Gastrocnemius medialis (tissue), 4 donors: ENCODE measurements at regions of chr4 and their contacts with region 1.

Region 1: GRCh38 chr4:109406338-109406931 is 27.2 kb upstream of the SEC24B start:
- DNase-seq: no peak
- ATAC-seq: peak; percentile 73 to 80
- H3K4me3 ChIP-seq: no peak overlapping the region
- H3K27ac ChIP-seq: no peak overlapping the region
- H3K4me1 ChIP-seq: no peaks in the 10 kb centered on the region
- H3K27me3 ChIP-seq: no peaks in the 10 kb centered on the region
- CTCF ChIP-seq: peak; percentile 47 to 70 (median 63)
- POLR2A ChIP-seq: no peak

Region 2: DNA sequence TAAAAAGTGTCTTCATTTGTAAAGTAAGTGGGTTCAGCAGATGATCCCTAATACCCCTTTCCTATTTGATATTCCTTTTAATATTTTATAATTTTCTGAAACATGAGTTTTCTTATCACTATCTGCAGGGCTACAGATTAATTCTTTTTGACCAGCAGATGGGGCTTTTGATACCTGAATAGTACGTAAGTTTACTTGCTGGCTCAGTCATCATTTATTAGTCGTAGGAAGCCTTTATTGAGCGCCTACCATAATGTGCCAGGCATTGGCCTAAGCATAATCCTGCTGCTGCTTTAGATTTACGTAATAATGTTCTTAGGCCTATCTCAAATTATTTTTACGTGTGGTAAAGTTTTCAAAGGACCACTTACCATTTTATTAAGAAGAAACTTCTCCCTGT is 723.0 kb before region 1 on chr4:
- in situ Hi-C with region 1: loop called in 1 of 4 experiments (anchors 25 kb)
- intact Hi-C with region 1: loop called (anchors 5 kb)
- DNase-seq: no peak
- ATAC-seq: no peak
- H3K4me3 ChIP-seq: no peak overlapping the region
- H3K27ac ChIP-seq: no peak overlapping the region
- H3K4me1 ChIP-seq: no peaks in the 10 kb centered on the region
- H3K27me3 ChIP-seq: no peaks in the 10 kb centered on the region
- CTCF ChIP-seq: peak in 2 of 5 experiments; percentile 29 to 31
- POLR2A ChIP-seq: no peak

Region 3: DNA sequence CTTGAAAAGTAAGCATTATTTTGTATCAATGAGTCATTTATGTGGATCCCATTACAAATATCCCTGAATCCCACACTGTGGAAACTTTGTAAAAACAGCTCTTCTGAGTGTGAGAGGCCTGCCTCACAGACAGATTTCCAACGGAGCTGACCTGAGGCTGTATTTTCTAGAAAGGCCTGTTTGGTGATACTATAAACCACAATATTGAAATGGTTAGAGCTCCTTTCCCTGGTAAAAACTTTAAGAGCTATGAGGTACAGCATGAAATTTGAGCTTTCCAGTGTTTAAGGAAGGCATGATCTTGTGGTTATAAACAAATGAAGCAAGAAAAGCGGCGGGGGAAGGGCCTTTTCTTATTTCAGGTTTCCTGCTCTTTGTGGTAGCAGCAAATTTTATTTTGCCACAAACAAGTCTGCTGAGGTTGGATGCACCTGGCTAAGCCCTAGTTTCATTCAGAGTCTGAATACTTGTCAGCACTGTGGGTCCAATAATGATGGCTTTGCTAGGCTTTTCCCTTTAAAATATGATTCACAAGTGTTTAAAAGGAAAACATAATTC is 556.7 kb before region 1 on chr4:
- in situ Hi-C with region 1: loop called in 1 of 4 experiments (anchors 10 kb)
- intact Hi-C with region 1: no loop called
- DNase-seq: no peak
- ATAC-seq: no peak
- H3K4me3 ChIP-seq: no peak overlapping the region
- H3K27ac ChIP-seq: no peak overlapping the region
- H3K4me1 ChIP-seq: no peaks in the 10 kb centered on the region
- H3K27me3 ChIP-seq: no peaks in the 10 kb centered on the region
- CTCF ChIP-seq: no peak
- POLR2A ChIP-seq: no peak

Region 4: GRCh38 chr4:109998867-109999584 is 592.6 kb after region 1 on chr4:
- in situ Hi-C with region 1: loop called in 2 of 4 experiments (anchors 25 kb)
- intact Hi-C with region 1: no loop called
- DNase-seq: no peak
- ATAC-seq: peak in 1 of 2 donors; percentile 56
- H3K4me3 ChIP-seq: no peak overlapping the region
- H3K27ac ChIP-seq: no peak overlapping the region
- H3K4me1 ChIP-seq: no peaks in the 10 kb centered on the region
- H3K27me3 ChIP-seq: no peaks in the 10 kb centered on the region
- CTCF ChIP-seq: peak in 3 of 5 experiments; percentile 43 to 60 (median 51)
- POLR2A ChIP-seq: no peak